ENCODE measurements at regions of chr1 and their contacts with region 1.

Region 1: GRCh38 chr1:44044071-44044801 is 13.0 kb upstream of the SLC6A9 start:
- DNase-seq: no peak
- H3K4me3 ChIP-seq: no peak overlapping the region
- H3K27ac ChIP-seq: no peak overlapping the region
- H3K4me1 ChIP-seq: no peaks in the 10 kb centered on the region
- H3K27me3 ChIP-seq: no peaks in the 10 kb centered on the region
- CTCF ChIP-seq: no peak
- POLR2A ChIP-seq: no peak

Region 2: DNA sequence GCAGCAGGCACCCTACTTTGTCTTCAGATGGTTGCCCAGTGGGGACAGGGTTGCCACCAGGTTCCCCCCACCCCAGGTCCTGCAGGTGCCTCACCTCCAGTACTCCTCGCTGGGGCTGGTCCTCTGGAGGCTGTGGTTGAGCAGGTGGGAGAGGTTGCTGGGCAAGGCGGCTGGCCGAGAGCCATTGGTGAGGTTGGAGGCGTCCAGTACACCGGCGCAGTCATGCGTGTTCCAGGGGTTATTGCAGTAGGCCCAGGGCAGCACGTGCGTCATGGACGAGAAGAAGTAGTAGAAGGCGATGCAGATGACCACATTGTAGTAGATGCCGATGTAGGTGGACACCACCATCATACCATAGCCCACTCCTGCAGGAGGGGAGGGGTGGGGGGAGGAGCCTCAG is 36.0 kb before region 1 on chr1:
- intact Hi-C with region 1: loop called (anchors 5 kb)
- DNase-seq: no peak
- H3K4me3 ChIP-seq: no peak overlapping the region
- H3K27ac ChIP-seq: no peak overlapping the region
- H3K4me1 ChIP-seq: no peaks in the 10 kb centered on the region
- H3K27me3 ChIP-seq: no peaks in the 10 kb centered on the region
- CTCF ChIP-seq: no peak
- POLR2A ChIP-seq: no peak

Measured in uterus (tissue), 4 donors.